PC-9 (cell line): ENCODE measurements at regions of chr16 and their contacts with region 1.

Region 1: DNA sequence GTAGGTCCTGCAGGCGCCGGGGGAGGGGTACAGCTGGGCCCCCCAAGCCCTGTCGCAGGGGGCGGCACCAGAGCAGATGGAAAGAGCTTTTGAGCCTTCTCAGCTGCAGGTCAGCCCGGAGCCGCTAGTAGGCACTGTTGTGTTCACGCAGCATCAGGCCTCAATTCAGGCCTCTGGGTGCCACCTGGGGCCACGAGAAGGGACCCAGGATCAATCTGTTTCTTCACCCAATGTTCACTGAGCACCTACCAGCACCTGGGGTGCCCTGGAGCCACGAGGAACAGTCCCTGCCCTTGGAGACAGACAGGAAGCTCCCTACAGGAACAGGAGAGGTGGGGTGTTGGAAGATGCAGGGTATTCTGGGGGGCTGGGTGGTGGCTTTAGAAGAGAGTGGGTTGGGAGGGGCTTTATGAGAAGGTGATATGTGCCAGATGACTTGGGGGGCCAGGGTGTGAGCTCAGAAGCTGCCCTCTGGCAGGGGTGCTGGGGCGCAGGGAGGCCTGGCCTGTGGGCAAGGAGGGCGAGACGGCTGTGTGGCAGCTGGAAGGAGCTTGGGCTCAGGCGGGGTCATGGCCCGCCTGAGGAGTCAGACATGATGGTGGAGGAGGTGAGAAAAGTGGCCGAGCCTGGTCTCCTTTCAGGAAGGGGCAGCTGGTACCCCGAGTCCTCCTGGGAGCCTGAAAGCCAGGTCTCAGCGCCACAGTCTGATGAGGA is 121.9 kb upstream of the GSE1 start:
- DNase-seq: no peak
- H3K4me3 ChIP-seq: no peak overlapping the region
- H3K27ac ChIP-seq: peak overlapping the region; percentile 29; the same call in 1 of the 2 replicates
- H3K4me1 ChIP-seq: peaks cover 26% of the 10 kb centered on the region
- H3K27me3 ChIP-seq: no peaks in the 10 kb centered on the region
- CTCF ChIP-seq: peak; percentile 72

Region 2: DNA sequence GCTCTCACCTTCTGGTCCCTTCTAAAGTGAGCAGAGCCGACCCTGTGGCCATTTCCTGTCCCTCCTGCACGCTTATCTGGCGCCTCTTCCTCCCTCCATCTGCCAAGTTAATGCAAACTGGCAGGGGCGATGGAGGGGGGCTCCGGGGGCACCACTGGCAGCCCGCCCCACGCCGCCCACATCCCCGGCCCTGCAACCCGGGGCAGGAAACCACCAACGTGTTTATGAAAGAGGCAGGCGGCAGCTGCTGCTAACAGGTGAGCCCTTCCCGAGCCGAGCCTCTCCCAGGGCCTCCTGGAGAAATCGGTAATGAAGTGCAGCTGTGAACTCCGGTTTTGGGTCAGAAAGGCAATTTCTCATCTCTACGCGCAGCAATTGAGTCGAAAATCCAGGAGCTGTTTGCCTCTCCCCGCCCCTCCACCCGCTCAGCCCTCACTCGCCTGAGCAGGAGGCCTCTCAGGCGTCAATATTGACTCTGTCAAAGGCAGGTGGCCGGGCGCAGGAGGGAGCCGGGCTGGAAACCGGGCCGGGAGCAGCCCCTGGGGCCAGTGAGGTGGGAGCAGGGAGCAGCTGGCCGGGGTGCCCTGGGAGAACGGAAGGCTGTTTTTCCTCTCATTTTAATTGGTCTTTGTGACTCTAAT is 42.5 kb before region 1 on chr16:
- CTCF ChIA-PET with region 1: no interaction called
- POLR2A ChIA-PET with region 1: no interaction called
- intact Hi-C with region 1: no loop called
- DNase-seq: no peak
- H3K4me3 ChIP-seq: no peak overlapping the region
- H3K27ac ChIP-seq: no peak overlapping the region
- H3K4me1 ChIP-seq: no peaks in the 10 kb centered on the region
- H3K27me3 ChIP-seq: no peaks in the 10 kb centered on the region
- CTCF ChIP-seq: no peak

Region 3: GRCh38 chr16:85465968-85466700 is 25.1 kb before region 1 on chr16:
- CTCF ChIA-PET with region 1: interaction called, 5 read pairs
- POLR2A ChIA-PET with region 1: interaction called, 36 read pairs
- intact Hi-C with region 1: no loop called
- DNase-seq: peak; percentile 41 to 52
- H3K4me3 ChIP-seq: no peak overlapping the region
- H3K27ac ChIP-seq: no peak overlapping the region
- H3K4me1 ChIP-seq: peaks cover 18% of the 10 kb centered on the region
- H3K27me3 ChIP-seq: peaks cover 5% of the 10 kb centered on the region; the same call in 1 of the 2 replicates
- CTCF ChIP-seq: no peak

Region 4: DNA sequence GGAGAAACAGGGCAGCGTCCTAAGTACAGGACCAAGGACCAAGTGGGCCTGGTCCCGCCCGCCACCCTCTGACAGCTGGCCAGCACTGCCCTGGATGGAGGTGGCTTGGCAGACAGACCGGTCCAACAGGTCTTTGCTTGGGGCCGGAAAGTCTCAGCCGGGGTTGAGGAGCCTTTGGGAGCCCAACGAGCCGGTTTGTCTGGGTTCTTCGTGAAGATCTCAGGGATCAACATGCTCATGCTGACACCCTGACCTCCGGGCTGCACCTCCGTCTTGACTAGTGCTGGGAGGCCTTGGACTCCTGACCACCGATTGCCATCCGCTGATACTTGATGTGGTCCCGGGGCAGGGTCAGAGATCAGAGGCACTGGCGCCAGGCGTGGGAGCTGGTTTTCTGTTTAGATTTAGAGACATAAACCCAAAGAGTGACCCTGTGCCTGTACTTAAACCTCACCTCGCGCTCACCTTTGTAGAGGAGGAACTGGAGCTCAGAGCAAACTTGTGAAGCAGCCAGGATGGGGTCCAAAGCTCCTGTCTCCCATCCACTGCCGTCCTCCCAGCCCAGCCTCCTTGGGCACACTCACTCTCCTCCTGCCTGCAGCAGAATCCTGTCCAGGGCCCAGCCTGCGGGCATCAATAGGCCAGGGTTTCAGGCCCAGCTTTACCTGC is 29.8 kb after region 1 on chr16:
- CTCF ChIA-PET with region 1: interaction called, 11 read pairs
- POLR2A ChIA-PET with region 1: no interaction called
- intact Hi-C with region 1: loop called (anchors 1 kb)
- DNase-seq: peak; percentile 91 to 96
- H3K4me3 ChIP-seq: no peak overlapping the region; the same call in 1 of the 2 replicates
- H3K27ac ChIP-seq: peak overlapping the region; percentile 55
- H3K4me1 ChIP-seq: peaks cover 70% of the 10 kb centered on the region
- H3K27me3 ChIP-seq: no peaks in the 10 kb centered on the region
- CTCF ChIP-seq: no peak